ENCODE measurements at regions of chr1 and their contacts with region 1.

Region 1: DNA sequence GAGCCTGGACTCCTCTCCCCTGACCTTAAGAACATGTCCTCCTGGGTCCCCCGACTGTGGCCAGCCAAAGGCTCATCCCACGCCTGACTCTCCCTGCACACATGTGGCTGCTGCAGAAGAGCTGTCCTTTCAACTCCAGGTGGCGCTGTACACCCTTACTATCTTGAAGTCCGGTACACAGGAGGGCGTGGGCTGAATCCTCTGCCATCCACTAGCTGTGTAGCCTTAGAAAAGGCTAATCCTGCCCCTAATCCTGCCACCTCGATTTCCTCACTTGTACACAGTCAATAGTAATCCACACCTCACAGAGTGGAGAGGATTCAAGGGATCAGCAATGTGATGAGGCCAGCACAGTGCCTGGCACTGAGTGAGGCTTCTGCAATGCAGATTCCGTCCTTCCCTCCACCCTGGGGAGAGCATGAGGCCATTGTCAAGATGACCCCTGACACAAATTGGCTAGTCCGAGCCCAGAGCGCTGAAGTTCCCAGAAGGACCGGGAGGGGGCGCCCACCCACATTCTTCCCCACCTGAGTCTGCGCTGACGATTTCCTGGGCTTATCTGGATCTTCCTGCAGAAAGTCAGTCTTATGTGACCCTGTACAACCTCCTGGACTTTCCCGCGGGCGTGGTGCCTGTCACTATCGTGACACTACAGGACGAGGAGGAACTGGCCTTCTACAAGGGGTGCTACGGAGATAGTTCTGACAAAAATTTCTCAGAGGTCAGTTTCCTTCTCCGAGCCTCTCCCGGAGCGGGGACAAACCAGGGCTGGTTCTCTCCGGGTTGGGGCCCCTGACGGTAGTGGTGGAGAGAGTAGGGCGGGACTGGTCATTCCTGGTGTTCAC is 47.1 kb upstream of the DMBX1 start:
- DNase-seq: peak; percentile 73
- H3K4me3 Mint-ChIP-seq: peak overlapping the region; percentile 78
- H3K27ac Mint-ChIP-seq: peak overlapping the region; percentile 57
- H3K4me1 Mint-ChIP-seq: peaks cover 13% of the 10 kb centered on the region
- H3K27me3 Mint-ChIP-seq: peaks cover 27% of the 10 kb centered on the region

Region 2: GRCh38 chr1:46425726-46426125 is 16.8 kb before region 1 on chr1:
- CTCF ChIA-PET with region 1: interaction called, 13 read pairs
- POLR2A ChIA-PET with region 1: interaction called, 4 read pairs
- DNase-seq: no peak
- H3K4me3 Mint-ChIP-seq: peak overlapping the region; percentile 65
- H3K27ac Mint-ChIP-seq: no peak overlapping the region
- H3K4me1 Mint-ChIP-seq: peaks cover 30% of the 10 kb centered on the region
- H3K27me3 Mint-ChIP-seq: peaks cover 8% of the 10 kb centered on the region

Region 3: GRCh38 chr1:46431691-46432090 is 10.8 kb before region 1 on chr1:
- CTCF ChIA-PET with region 1: interaction called, 13 read pairs
- POLR2A ChIA-PET with region 1: no interaction called
- DNase-seq: no peak
- H3K4me3 Mint-ChIP-seq: no peak overlapping the region
- H3K27ac Mint-ChIP-seq: no peak overlapping the region
- H3K4me1 Mint-ChIP-seq: no peaks in the 10 kb centered on the region
- H3K27me3 Mint-ChIP-seq: peaks cover 2% of the 10 kb centered on the region

Region 4: GRCh38 chr1:46477153-46477929 is 34.8 kb after region 1 on chr1:
- CTCF ChIA-PET with region 1: interaction called, 13 read pairs
- POLR2A ChIA-PET with region 1: no interaction called
- DNase-seq: peak; percentile 79
- H3K4me3 Mint-ChIP-seq: no peak overlapping the region
- H3K27ac Mint-ChIP-seq: no peak overlapping the region
- H3K4me1 Mint-ChIP-seq: no peaks in the 10 kb centered on the region
- H3K27me3 Mint-ChIP-seq: peaks cover 41% of the 10 kb centered on the region

Region 5: DNA sequence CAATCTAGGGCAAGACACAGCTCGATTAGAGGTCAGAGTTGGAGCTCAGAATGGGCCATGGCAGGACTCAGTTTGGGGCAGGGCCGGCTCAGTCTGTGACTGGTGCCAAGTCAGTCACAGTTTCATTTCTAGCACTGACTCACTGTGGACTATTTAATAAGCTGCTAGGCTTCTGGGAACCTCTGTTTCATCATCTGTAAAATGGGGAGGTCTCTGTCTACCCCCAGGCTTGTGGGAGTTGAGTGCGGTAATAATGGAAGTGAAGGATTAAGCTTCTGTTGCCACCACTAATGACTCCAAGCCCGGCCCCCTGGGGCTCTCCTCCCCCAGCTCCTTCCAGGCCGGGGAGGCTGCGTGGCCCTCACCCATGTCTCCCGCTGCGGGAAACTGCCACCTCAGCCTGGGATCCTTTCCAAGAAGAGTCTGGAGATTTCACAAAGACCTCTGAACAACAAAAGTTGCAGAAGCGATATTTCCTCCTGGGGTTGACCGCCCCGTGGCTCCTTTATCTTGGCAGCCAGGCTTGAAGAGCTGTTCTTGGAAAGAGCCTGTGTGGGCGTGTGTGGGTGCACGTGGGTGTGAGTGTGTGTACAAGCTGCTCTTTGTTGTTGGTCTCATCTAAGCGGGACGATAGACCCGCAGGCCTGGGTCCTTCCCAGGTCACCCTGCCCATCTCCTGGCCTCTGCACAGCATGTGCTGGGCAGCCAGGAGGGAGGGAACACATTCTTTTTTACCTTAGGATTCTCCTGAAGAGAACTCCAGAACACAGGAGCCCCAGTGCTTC is 79.8 kb after region 1 on chr1:
- CTCF ChIA-PET with region 1: interaction called, 89 read pairs
- POLR2A ChIA-PET with region 1: no interaction called
- DNase-seq: peak; percentile 45
- H3K4me3 Mint-ChIP-seq: peak overlapping the region; percentile 32
- H3K27ac Mint-ChIP-seq: peak overlapping the region; percentile 65
- H3K4me1 Mint-ChIP-seq: peaks cover 34% of the 10 kb centered on the region
- H3K27me3 Mint-ChIP-seq: peaks cover 18% of the 10 kb centered on the region